ENCODE measurements at regions of chr17 and their contacts with region 1.

Region 1: DNA sequence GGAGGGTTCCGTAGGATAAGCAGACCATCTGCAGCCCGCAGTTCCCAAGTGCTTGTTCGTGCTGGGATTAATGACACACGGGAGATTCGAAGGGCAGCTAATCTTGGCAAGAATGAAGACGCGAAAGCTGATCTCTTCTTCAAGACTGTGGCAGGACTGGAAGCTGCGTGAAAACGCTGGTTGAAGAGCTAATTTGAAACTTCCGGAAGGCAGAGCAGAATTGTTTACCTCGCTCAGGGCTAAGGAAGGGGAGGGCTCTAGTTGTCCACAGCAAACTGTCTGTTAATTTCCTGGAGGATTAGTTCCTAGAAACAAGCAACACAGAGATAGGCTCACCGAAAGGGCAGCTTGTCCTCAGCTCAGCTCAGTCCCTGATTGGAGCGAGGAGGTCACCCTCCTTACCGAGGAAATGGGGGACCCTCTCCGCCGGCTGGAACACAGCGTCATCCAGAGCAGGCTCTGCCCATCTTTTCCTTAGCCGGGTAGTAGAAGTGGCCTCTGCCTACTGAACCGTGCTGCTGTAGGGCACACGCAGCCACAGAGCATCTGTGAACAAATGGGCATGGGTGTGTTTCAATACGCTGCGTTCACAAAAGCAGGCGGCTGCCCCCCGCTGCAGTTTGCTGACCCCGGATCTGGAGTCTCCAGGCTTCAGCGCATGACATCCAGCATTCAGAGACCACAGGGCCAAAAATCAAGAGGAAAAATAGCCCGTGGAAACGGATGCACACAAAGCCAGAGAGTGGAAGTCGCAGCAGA is 16.7 kb upstream of the BAIAP2 start:
- DNase-seq: no peak

Region 2: DNA sequence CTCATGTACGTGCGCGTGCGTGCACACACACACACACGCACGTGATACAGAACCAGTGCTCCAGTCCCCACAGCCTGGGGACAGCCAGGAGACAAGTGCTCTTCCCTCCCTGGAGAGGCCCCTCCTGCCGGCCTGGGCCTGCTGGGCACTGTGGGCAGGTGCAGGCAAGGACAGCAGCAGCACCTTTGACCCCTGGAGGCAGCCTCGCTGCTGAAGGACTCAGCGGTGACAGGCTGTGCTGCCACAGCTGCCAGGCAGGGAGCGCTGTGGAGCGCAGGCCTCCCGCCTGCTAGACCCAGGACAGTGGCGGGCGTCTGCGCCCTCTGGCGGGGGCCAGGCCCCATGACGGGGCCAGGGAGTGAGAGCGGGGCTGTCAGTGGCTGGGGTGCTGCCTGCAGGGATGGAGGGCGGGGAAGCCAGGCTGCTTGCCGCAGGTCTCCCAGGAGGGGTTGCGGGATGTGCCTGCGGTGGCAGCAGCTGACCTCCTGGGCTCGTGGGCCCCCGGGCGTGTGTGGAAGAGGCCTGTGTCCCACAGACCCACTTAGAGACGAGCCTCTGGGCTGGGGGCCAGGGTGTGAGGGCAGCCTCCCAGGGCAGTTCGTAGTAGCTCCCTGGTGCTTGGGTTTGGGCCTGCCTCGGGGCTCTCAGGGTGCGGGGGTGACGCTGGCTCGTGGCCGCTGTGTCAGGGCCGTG is 83.5 kb after region 1 on chr17:
- in situ Hi-C with region 1: loop called (anchors 25 kb)
- DNase-seq: peak; percentile 87